Activated CD4-positive, alpha-beta memory T cell treated with anti-CD3 and anti-CD28 coated beads for 36 hours (primary cell): ENCODE measurements at regions of chr12 and their contacts with region 1.

Region 1: GRCh38 chr12:120292661-120293531 is at the start of gene RNU4-1:
- DNase-seq: peak; percentile 87
- H3K4me3 Mint-ChIP-seq: no peak within 1 kb of the TSS
- H3K27ac Mint-ChIP-seq: no peak within 1 kb of the TSS
- H3K4me1 Mint-ChIP-seq: peaks cover 5% of the 10 kb centered on the region
- H3K27me3 Mint-ChIP-seq: no peaks in the 10 kb centered on the region
- total RNA-seq, gene RNU4-1: 1,180 to 1,201 TPM

Region 2: GRCh38 chr12:119988782-119989668 is 303.9 kb before region 1 on chr12 and contains the start of gene BICDL1:
- CTCF ChIA-PET with region 1: no interaction called
- POLR2A ChIA-PET with region 1: interaction called, 15 read pairs
- intact Hi-C with region 1: no loop called
- DNase-seq: peak; percentile 99
- H3K4me3 Mint-ChIP-seq: peak within 1 kb of the TSS; percentile 88
- H3K27ac Mint-ChIP-seq: peak within 1 kb of the TSS; percentile 91
- H3K4me1 Mint-ChIP-seq: peaks cover 43% of the 10 kb centered on the region
- H3K27me3 Mint-ChIP-seq: no peaks in the 10 kb centered on the region
- total RNA-seq, gene BICDL1: 143 to 155 TPM

Region 3: GRCh38 chr12:120032242-120032641 is 260.7 kb before region 1 on chr12:
- CTCF ChIA-PET with region 1: no interaction called
- POLR2A ChIA-PET with region 1: no interaction called
- intact Hi-C with region 1: no loop called
- DNase-seq: no peak
- H3K4me3 Mint-ChIP-seq: no peak overlapping the region
- H3K27ac Mint-ChIP-seq: no peak overlapping the region
- H3K4me1 Mint-ChIP-seq: peaks cover 19% of the 10 kb centered on the region
- H3K27me3 Mint-ChIP-seq: no peaks in the 10 kb centered on the region

Region 4: GRCh38 chr12:120116792-120117651 is 175.9 kb before region 1 on chr12:
- CTCF ChIA-PET with region 1: no interaction called
- POLR2A ChIA-PET with region 1: interaction called, 42 read pairs
- intact Hi-C with region 1: loop called (anchors 2 kb)
- DNase-seq: peak; percentile 98
- H3K4me3 Mint-ChIP-seq: peak overlapping the region; percentile 88
- H3K27ac Mint-ChIP-seq: peak overlapping the region; percentile 89
- H3K4me1 Mint-ChIP-seq: peaks cover 67% of the 10 kb centered on the region
- H3K27me3 Mint-ChIP-seq: no peaks in the 10 kb centered on the region

Region 5: DNA sequence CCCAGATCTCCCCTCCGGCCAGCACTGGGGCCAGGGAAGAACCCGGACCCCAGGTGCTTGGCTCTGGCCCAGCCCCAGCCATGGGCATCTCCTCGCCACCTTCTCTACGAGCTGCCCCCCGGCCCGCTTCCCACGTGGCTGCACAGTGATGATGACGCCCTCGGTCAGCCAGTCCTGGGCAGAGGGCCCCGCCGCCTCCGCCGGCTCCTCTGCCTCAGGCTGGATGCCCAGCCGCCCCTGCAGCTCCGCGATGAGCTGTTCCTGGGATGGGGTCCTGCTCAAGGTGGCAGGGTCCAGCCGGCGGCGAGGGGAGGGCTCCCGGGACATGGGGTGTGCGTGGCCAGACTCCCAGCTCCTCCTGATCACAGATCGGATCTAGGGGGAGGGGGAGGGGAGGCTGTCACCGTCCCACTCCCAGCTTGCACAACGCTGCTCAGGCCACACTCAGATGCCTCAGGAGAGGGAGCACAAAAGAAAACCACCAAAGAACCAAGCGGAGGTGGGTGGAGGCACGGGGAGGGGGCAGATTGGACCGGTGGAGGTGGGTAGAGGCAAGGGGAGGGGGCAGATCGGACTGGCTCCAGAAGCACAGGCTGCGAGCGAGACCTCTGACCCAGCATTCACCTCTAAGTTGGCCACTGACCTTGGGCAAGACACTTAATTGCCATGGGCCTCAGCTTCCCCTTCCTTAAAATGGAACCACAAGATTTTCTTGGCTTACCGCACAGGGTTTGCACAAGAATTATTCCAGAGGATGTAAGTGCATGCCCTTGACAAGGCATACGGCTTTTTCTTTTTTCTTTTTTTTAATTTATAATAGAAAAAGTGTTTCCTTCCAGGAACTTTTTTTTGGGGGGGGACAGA is 75.9 kb before region 1 on chr12:
- CTCF ChIA-PET with region 1: no interaction called
- POLR2A ChIA-PET with region 1: interaction called, 14 read pairs
- intact Hi-C with region 1: no loop called
- DNase-seq: no peak
- H3K4me3 Mint-ChIP-seq: no peak overlapping the region
- H3K27ac Mint-ChIP-seq: no peak overlapping the region
- H3K4me1 Mint-ChIP-seq: no peaks in the 10 kb centered on the region
- H3K27me3 Mint-ChIP-seq: no peaks in the 10 kb centered on the region

Region 6: DNA sequence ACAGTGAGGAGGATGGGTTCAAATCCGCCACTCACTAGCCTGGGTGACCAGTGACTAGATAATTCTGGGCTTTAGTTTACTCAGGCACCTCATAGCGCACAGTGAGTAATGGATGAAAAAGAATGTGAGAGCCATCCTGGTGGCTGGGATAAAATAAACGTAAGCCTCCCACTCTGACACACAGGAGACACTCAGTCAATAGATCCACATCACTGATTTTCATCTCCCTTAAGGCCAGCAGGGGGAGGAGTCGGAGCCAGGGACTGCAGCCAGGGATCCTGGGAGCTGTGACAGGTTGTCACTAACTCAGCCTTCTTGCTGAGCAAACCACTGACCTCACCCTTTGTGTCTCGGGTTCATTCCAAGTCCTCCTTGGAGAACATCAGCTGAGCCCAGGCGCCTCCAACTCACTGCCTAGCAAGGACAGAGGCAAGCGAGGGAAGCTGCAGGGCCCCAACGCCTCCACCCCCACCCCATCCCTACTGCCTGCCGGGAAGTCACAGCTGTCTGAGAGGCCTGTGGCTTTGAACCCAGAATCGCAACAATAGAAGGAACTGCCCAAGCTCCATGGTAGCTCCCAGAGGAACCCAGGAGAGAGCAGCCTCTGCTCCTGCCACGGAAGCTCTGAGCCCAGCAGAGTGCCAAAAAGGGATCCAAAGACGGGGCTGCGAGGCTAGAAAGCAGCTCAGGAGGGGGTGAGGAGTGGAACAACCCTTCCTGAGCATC is 58.1 kb before region 1 on chr12:
- CTCF ChIA-PET with region 1: interaction called, 150 read pairs
- POLR2A ChIA-PET with region 1: interaction called, 261 read pairs
- intact Hi-C with region 1: loop called (anchors 1 kb)
- DNase-seq: peak; percentile 35
- H3K4me3 Mint-ChIP-seq: no peak overlapping the region
- H3K27ac Mint-ChIP-seq: peak overlapping the region; percentile 62
- H3K4me1 Mint-ChIP-seq: peaks cover 86% of the 10 kb centered on the region
- H3K27me3 Mint-ChIP-seq: no peaks in the 10 kb centered on the region

Region 7: DNA sequence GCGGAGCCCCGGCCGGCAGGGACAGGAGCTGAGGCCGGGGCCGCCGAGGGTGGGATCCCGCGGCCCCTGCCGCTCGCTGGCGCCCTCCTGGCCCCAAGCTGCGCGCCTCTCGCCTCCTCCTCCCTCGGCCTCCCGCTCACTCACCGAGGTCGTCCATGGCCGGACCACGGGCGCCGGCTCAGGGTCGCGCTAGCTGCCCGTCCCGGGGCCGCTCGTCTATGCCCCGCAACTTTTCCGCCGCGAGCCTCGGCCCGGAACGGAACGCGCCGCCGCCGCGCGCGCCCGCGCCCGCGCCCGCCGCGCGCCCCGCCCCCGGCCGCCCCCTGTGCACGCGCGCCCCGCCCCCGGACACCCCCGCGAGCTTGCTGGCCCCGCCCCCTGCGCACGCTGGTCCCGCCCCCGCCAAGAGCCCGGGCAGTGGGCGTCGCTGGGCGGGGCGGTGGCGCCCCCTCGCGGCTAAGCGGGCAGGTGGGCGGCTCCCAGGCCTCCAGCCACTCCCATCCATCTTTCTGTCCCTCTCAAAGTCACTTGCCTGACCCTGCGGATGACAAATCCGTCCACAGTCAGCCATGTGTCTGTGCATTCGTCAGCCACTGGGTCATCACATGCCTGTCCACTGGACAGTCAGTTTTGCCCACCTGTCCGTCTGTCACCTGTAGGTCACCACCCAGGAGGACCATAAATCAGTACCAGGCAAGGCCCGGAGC is 27.3 kb before region 1 on chr12 and contains the start of gene PXN:
- CTCF ChIA-PET with region 1: interaction called, 14 read pairs
- POLR2A ChIA-PET with region 1: interaction called, 52 read pairs
- intact Hi-C with region 1: no loop called
- DNase-seq: peak; percentile 92
- H3K4me3 Mint-ChIP-seq: peak within 1 kb of the TSS; percentile 80
- H3K27ac Mint-ChIP-seq: peak within 1 kb of the TSS; percentile 66
- H3K4me1 Mint-ChIP-seq: peaks cover 38% of the 10 kb centered on the region
- H3K27me3 Mint-ChIP-seq: no peaks in the 10 kb centered on the region
- total RNA-seq, gene PXN: 74.0 to 75.0 TPM

Region 8: DNA sequence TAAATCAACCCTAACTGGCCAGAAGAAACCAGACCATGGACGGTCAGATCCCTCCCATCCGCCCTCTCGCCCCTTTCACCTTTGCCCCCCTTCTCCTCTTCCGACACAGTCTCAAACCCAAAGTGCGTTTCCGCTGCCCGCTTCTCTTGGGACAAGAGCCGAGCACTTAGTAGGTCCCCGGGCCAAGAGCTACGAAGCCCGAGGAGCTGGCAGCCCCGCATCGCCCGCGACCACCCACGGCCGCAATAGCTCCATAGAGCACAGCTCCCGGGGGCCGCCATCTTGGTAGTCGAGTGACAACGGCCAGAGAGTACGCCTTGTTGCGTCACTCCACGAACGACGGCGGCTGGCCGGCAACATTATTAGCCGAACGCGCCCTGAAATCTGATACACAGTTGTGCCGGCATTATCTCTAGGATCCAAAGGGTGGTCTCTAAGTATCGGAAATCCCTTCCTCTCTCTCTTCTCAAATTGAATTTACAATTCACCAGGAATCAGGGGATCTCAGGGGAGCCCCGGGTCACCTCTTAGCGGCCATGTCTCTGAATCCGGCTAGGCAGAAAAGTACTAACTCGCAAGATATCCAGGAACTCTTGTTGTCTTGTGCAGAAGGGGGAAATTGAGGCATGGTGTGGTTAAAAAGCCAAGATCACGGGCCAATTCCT is 236.1 kb after region 1 on chr12 and contains the start of gene COQ5:
- CTCF ChIA-PET with region 1: no interaction called
- POLR2A ChIA-PET with region 1: interaction called, 14 read pairs
- intact Hi-C with region 1: no loop called
- DNase-seq: peak; percentile 91
- H3K4me3 Mint-ChIP-seq: peak within 1 kb of the TSS; percentile 100
- H3K27ac Mint-ChIP-seq: peak within 1 kb of the TSS; percentile 97
- H3K4me1 Mint-ChIP-seq: peaks cover 19% of the 10 kb centered on the region
- H3K27me3 Mint-ChIP-seq: no peaks in the 10 kb centered on the region
- total RNA-seq, gene COQ5: 30.1 to 31.6 TPM

Region 9: GRCh38 chr12:120761519-120761934 is 468.6 kb after region 1 on chr12:
- CTCF ChIA-PET with region 1: no interaction called
- POLR2A ChIA-PET with region 1: no interaction called
- intact Hi-C with region 1: no loop called
- DNase-seq: no peak
- H3K4me3 Mint-ChIP-seq: no peak overlapping the region
- H3K27ac Mint-ChIP-seq: no peak overlapping the region
- H3K4me1 Mint-ChIP-seq: peaks cover 11% of the 10 kb centered on the region
- H3K27me3 Mint-ChIP-seq: no peaks in the 10 kb centered on the region